Body of pancreas (tissue), 4 donors: ENCODE measurements at regions of chr9 and their contacts with region 1.

Region 1: DNA sequence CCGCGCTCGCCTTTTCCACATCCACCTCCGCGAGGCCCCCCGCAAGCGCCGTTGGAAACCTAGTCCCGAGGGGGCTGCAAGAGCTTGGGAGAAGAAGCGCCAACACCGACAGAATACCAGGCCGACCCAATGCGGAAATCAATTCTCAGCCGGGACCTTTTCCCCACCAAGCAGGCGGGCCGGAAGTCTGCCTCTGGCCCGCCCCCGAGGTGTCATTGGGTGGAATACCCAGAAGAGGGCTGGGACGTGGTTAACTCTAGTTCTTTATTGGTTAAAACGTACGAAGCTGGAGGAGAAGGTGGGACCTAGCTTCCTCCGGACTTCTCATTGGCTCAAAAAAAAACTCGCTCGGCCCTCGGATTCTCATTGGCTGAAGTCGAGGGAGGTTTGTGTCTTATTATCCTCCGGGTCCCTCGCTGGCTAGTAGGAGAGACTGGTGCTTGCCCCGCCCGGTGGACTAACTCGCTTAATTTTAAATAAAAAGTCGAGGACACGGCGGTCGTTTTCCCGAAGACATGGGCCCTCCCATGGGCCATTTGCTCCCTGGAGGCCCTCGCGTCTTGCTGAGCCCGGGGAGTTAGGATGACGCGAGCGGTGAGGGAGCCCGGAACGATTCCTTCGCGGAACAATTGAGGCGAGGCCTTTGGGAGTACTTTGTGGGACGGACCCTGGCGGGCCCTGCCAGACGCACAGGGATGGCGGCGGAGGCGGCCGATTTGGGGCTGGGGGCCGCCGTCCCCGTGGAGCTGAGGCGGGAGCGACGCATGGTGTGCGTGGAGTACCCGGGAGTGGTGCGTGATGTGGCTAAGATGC is at the start of gene GTF3C5:
- DNase-seq: peak; percentile 92 to 97 (median 94)
- ATAC-seq: peak; percentile 99
- H3K4me3 ChIP-seq: peak within 1 kb of the TSS; percentile 55 to 81
- H3K27ac ChIP-seq: peak within 1 kb of the TSS; percentile 72 to 94 (median 84)
- H3K4me1 ChIP-seq: peaks cover 38% of the 10 kb centered on the region
- H3K27me3 ChIP-seq: no peaks in the 10 kb centered on the region
- CTCF ChIP-seq: peak in 4 of 7 experiments; percentile 18 to 39 (median 26)
- POLR2A ChIP-seq: peak; percentile 19 to 79 (median 70)
- total RNA-seq, gene GTF3C5: 43.1 to 57.7 TPM

Region 2: DNA sequence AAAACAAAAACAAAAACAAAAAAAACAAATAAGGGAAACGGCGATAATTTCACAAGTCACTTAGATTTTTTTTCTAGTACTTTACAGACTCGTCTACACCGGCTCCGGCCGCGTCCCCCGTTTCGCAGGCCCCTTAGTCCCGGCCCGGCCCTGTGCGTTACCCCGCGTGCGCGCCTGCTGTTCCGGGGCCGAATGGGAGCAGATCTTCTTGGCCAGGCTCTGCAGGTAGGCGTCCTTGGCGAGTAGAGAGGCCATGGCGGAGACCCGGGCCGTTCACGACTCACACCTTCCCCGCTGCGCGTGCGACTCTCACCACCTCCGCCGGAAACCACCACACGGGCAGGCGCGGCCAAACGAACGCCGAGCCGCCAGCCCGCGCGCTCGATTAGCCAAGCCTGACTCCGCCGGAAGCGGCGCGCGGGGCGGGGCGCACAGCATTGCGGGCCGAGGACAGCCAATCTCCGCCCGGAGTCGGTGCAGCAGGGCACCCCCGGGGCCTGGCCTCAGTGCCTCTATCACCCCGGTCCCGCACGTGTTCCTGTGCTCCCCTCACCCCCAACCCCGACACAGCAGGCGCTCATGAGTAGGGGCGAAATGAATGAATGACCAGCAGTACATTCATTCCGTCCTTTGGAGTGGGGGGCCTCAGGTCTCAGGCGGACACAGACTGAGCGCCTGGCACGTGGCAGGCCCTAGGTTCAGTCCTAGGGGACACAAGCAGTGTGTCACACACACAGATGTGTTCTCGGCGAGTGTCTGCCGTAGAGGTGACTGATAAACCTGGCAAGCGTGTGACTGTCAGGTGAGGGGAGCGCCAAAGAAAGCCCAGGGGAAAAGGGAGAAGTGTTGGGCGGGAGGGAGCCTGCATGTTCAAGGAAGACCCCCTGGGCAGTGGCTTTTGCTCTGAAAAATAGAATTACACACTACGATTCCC is 305.6 kb after region 1 on chr9 and contains the start of gene SURF6:
- intact Hi-C with region 1: loop called (anchors 10 kb)
- DNase-seq: peak; percentile 88 to 92 (median 91)
- ATAC-seq: peak; percentile 98
- H3K4me3 ChIP-seq: peak within 1 kb of the TSS; percentile 91 to 99
- H3K27ac ChIP-seq: peak within 1 kb of the TSS; percentile 2 to 79 (median 66)
- H3K4me1 ChIP-seq: peaks cover 24% of the 10 kb centered on the region
- H3K27me3 ChIP-seq: no peaks in the 10 kb centered on the region
- CTCF ChIP-seq: peak in 3 of 7 experiments; percentile 4 to 37 (median 31)
- POLR2A ChIP-seq: peak; percentile 50 to 69 (median 66)
- total RNA-seq, gene SURF6: 20.8 to 37.9 TPM